CD8-positive, alpha-beta memory T cell (primary cell): ENCODE measurements at regions of chrX and their contacts with region 1.

Region 1: GRCh38 chrX:119606280-119607015 is at the start of gene NKRF:
- DNase-seq: peak; percentile 82 to 94 (median 87)
- H3K4me3 ChIP-seq: peak within 1 kb of the TSS; percentile 75
- H3K4me3 Mint-ChIP-seq: peak within 1 kb of the TSS; percentile 93 to 98 (median 94)
- H3K27ac ChIP-seq: peak within 1 kb of the TSS; percentile 86
- H3K27ac Mint-ChIP-seq: peak within 1 kb of the TSS; percentile 97 to 99 (median 99)
- H3K4me1 ChIP-seq: peaks cover 6% of the 10 kb centered on the region
- H3K4me1 Mint-ChIP-seq: peaks cover 27 to 51% (median 45%) of the 10 kb centered on the region in 3 donors
- H3K27me3 ChIP-seq: no peaks in the 10 kb centered on the region
- H3K27me3 Mint-ChIP-seq: peaks cover 0 to 3% of the 10 kb centered on the region in 2 donors
- total RNA-seq, gene NKRF: 27.2 to 28.4 TPM

Region 2: DNA sequence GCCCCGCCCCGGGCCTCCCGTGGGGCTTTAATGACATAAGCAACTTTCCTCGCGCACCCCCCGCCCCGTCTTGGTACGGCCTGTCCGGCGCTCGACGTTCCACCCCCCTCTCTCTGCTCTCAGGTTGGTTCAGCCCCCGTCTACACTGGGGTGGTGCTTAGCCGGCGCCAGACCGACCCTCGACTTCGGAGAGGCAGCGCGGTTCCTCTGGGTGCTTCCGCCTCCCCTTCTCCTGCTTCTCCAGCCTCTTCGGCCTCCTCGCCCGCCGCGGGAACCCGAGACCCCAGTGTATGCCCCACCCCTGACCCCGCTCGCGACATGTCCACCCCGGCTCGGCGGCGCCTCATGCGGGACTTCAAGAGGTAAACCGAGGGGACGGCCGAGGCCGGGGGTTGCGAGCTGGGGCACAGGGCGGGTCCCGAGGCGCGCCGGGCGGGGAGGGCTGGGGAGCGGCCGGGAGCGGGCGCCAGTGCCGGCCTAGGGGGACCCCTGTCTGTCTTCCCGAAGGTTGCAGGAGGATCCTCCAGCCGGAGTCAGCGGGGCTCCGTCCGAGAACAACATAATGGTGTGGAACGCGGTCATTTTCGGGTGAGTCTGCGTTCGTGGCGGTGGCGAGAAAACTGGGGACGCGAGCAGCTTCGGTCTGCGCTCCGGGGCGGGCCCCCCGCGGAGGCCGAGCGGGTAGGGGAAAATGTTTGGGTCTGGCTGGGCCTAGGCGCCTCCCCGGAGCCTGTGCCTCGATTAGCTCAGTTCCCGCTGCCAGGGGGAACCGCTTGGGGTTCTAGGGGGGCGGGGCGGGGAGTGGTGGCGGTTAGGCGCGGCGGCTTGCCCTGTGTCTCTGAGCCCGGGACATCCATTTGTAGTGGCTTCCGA is 31.8 kb before region 1 on chrX and contains the start of gene UBE2A:
- CTCF ChIA-PET with region 1: interaction called, 3 read pairs
- POLR2A ChIA-PET with region 1: interaction called, 20 read pairs
- DNase-seq: peak; percentile 83 to 94 (median 87)
- H3K4me3 ChIP-seq: peak within 1 kb of the TSS; percentile 54
- H3K4me3 Mint-ChIP-seq: peak within 1 kb of the TSS; percentile 84 to 96 (median 88)
- H3K27ac ChIP-seq: peak within 1 kb of the TSS; percentile 76
- H3K27ac Mint-ChIP-seq: peak within 1 kb of the TSS; percentile 86 to 97 (median 89)
- H3K4me1 ChIP-seq: peaks cover 18% of the 10 kb centered on the region
- H3K4me1 Mint-ChIP-seq: peaks cover 11 to 42% (median 19%) of the 10 kb centered on the region in 3 donors
- H3K27me3 ChIP-seq: no peaks in the 10 kb centered on the region
- H3K27me3 Mint-ChIP-seq: peaks cover 0 to 4% of the 10 kb centered on the region in 2 donors
- total RNA-seq, gene UBE2A: 67.7 to 70.8 TPM